Prostate gland (tissue), 2 donors: ENCODE measurements at regions of chr10 and their contacts with region 1.

Region 1: DNA sequence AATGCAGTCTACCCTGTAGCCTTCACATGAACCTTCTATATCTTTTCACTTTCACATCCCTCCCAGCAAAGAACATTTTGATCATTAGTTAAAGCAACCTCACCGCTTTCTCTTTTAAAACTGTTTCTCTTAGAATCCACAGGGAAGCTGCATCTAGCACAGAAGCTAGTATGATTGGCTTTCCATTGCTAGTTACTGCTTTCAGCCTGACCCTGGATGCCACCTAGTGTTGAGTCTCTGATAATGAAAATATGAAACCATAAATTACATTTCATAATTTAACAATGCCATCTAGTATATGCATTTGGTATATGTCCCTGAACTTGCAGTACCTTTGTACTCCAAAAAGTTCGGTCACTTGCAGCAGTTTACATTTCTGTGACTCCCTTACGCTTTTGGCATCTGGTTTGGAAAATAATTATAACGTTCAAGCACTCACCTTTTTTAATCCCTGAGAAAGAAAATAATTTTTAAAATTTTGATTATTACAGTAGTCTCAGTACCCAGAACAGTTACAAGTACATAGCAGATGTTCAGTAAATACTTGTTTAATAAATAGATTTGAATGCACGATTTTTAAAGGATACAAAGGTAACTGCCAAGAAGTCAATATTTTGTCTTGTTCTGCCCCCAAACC is 22.7 kb downstream of the CISD1 start:
- DNase-seq: peak; percentile 19
- H3K4me3 ChIP-seq: no peak overlapping the region
- H3K27ac ChIP-seq: no peak overlapping the region
- H3K4me1 ChIP-seq: no peaks in the 10 kb centered on the region
- H3K27me3 ChIP-seq: no peaks in the 10 kb centered on the region
- CTCF ChIP-seq: peak; percentile 46 to 71 (median 66)
- POLR2A ChIP-seq: no peak

Region 2: DNA sequence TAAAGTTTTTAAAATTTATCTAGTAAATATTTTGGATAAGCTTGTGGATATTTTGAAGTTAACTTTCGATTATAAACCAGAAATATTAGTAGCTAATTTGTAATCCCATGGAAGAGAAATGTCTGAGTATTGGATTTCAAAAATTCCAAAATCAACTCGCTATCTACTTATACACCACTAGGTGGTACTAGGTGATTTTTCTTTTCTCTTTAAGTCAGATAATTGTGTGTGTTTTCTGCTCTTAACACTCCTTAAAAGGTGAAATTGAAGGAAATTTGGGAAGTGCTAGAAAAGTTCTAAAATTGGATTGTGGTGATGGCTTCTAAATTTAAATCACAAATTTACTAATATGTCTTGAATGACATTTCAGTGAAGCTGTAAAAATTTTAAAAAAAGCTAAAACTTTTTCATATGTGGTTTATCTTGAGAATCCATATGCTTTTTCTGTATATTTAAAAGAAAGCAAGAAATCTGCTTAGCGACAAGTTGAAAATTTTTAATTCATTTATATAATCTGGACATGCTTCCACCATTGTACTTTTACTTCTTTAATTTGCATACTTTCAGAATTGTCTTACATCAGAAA is 114.2 kb before region 1 on chr10:
- intact Hi-C with region 1: loop called (anchors 1 kb)
- DNase-seq: no peak
- H3K4me3 ChIP-seq: no peak overlapping the region
- H3K27ac ChIP-seq: no peak overlapping the region
- H3K4me1 ChIP-seq: no peaks in the 10 kb centered on the region
- H3K27me3 ChIP-seq: no peaks in the 10 kb centered on the region
- CTCF ChIP-seq: peak in 3 of 4 experiments; percentile 54 to 69 (median 65)
- POLR2A ChIP-seq: no peak

Region 3: GRCh38 chr10:58225654-58226053 is 66.0 kb before region 1 on chr10:
- intact Hi-C with region 1: no loop called
- DNase-seq: no peak
- H3K4me3 ChIP-seq: no peak overlapping the region
- H3K27ac ChIP-seq: no peak overlapping the region
- H3K4me1 ChIP-seq: no peaks in the 10 kb centered on the region
- H3K27me3 ChIP-seq: no peaks in the 10 kb centered on the region
- CTCF ChIP-seq: no peak
- POLR2A ChIP-seq: no peak

Region 4: DNA sequence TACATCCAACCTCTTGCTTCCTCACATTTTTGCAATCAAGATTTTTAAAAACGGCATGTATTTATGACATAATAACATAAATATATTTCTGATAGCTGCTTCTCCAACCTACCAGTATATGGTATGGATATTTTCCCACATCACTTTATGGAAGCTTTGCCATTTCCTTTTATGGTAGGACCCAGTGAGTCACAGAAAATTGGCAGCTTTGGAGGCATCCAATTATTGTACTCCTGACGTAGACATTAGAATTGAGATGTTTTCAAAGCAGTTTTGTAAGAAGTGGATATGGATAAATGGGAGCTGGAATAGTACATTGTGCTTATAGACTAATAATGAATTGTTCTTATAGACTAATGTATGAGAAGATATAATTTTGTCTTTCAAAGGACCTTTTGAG is 197.3 kb after region 1 on chr10:
- intact Hi-C with region 1: no loop called
- DNase-seq: no peak
- H3K4me3 ChIP-seq: no peak overlapping the region
- H3K27ac ChIP-seq: no peak overlapping the region
- H3K4me1 ChIP-seq: no peaks in the 10 kb centered on the region
- H3K27me3 ChIP-seq: no peaks in the 10 kb centered on the region
- CTCF ChIP-seq: no peak
- POLR2A ChIP-seq: no peak